ENCODE measurements at regions of chr12 and their contacts with region 1.

Region 1: GRCh38 chr12:120428597-120429229 is 9.2 kb upstream of the COX6A1 start:
- DNase-seq: no peak
- H3K4me3 ChIP-seq: no peak overlapping the region
- H3K27ac ChIP-seq: no peak overlapping the region
- H3K4me1 ChIP-seq: peaks cover 0 to 9% (median 3%) of the 10 kb centered on the region in 4 donors
- H3K27me3 ChIP-seq: peaks cover 0 to 23% (median 0%) of the 10 kb centered on the region in 3 donors
- CTCF ChIP-seq: no peak
- EP300 ChIP-seq: no peak
- POLR2A ChIP-seq: no peak

Region 2: DNA sequence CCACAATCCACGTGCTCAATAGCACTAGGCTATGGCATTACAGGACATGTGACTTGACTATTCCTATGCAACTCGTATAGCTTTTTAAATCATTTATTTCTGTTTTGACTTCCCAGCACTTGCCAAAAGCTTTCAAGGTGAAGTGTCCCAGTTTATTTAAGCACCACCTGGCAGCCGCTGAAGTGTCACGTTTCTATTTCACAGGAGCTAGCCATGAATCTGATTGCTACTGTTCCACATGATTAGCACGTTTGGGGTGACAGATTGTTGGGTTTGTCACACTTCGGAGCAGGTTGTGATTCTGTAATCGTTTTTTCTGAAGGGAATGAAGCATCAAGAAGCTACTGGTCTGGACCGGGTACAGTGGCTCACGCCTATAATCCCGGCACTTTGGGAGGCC is 479.6 kb before region 1 on chr12:
- intact Hi-C with region 1: no loop called
- DNase-seq: peak; percentile 30 to 56
- H3K4me3 ChIP-seq: no peak overlapping the region
- H3K27ac ChIP-seq: no peak overlapping the region
- H3K4me1 ChIP-seq: no peaks in the 10 kb centered on the region
- H3K27me3 ChIP-seq: no peaks in the 10 kb centered on the region
- CTCF ChIP-seq: no peak
- EP300 ChIP-seq: no peak
- POLR2A ChIP-seq: no peak

Region 3: DNA sequence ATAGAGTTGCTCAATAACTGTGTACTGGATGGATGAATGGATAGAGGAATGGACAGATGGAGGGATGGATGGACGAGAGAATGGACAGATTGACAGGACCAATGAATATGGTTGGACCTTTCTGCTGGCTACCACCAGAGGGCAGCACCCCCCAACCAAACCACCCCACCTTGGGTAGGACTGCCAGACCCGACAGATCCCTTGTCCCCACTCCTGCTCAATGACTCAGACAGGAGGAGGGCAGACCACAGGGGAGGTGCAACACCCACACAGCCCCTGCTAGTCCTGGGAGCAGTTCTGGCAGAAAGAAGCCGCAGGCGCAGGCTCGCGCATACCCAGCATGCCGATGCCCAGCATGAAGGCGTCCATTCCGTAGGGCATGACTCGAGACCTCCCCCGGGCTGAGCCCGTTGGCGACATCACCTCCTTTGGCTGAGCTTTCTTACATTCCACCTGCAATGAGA is 72.1 kb before region 1 on chr12:
- intact Hi-C with region 1: loop called (anchors 5 kb)
- DNase-seq: peak; percentile 78 to 91
- H3K4me3 ChIP-seq: no peak overlapping the region
- H3K27ac ChIP-seq: no peak overlapping the region
- H3K4me1 ChIP-seq: peaks cover 5 to 12% (median 6%) of the 10 kb centered on the region in 4 donors
- H3K27me3 ChIP-seq: peaks cover 0 to 6% (median 5%) of the 10 kb centered on the region in 3 donors
- CTCF ChIP-seq: peak in 6 of 7 experiments; percentile 68 to 93 (median 79)
- EP300 ChIP-seq: no peak
- POLR2A ChIP-seq: no peak

Region 4: DNA sequence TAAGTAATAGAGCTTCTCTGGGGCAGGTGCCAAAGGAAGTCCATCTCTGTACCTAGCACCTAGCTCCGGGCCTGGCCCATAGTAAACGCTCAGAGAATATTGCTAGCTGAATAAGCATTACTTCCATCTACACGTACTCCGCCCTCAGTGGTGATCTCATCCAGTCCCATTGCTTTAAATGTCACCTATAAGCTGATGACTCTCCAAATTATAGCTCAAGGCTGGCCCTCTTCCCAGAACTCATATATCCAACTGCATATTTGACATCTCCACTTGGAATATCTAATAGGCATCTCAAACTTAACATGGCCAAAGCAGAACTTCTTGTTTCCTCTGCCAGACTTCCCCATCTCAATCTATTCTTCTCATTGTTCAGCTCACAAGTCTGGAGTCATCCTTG is 60.3 kb after region 1 on chr12:
- intact Hi-C with region 1: no loop called
- DNase-seq: peak in 1 of 2 donors; percentile 36
- H3K4me3 ChIP-seq: no peak overlapping the region
- H3K27ac ChIP-seq: no peak overlapping the region
- H3K4me1 ChIP-seq: no peaks in the 10 kb centered on the region
- H3K27me3 ChIP-seq: no peaks in the 10 kb centered on the region
- CTCF ChIP-seq: no peak
- EP300 ChIP-seq: no peak
- POLR2A ChIP-seq: no peak

Measured in stomach (tissue), 19 donors.